Ascending aorta (tissue), 2 donors: ENCODE measurements at regions of chr20 and their contacts with region 1.

Region 1: GRCh38 chr20:21303061-21303871 is at the start of gene XRN2:
- DNase-seq: peak; percentile 76 to 97
- H3K4me3 ChIP-seq: peak within 1 kb of the TSS; percentile 76 to 80
- H3K27ac ChIP-seq: peak within 1 kb of the TSS; percentile 94 to 98
- H3K4me1 ChIP-seq: peaks cover 4 to 7% of the 10 kb centered on the region in 2 donors
- H3K27me3 ChIP-seq: no peaks in the 10 kb centered on the region
- CTCF ChIP-seq: peak in 1 of 3 experiments; percentile 12
- total RNA-seq, gene XRN2: 19.5 TPM

Region 2: DNA sequence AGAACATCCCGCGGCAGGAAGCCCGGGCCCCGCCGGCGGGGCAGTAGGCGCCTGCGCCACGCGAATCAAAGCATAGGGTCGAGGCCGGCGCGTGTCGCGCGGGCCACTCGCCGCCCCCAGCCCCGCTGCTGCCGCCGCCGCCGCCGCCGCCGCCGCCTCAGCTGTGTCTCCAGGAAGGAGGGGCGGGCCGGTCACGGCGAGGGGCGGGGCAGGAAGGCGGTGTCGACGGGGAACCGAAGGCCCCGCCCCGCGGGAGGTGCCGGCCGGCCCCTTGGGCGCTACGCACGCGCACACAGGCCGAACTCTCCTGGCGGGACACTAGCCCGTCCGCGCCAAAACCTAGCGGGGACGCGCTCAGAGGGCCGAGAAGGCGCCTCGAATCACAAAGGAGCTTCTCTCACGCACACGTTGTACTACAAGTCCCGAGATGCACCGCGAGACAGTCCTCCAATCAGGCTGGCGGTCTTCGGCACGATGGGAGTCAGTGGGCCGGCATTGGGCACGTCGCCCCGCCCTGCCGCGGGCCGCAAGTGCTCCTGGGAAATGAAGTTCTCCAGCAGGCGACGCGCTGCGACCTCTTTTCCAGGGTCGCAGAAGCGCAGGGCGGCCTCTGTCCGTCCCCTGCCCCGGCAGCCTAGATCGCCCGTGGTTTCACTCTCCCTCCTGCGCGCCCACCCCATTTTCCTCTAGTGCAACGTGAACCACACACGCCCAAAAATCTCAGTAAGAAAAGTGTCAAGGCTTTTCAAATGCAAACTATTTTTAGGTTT is 590.6 kb before region 1 on chr20 and contains the start of gene RALGAPA2:
- intact Hi-C with region 1: loop called (anchors 2 kb)
- DNase-seq: peak; percentile 92 to 99
- H3K4me3 ChIP-seq: peak within 1 kb of the TSS; percentile 93 to 96
- H3K27ac ChIP-seq: peak within 1 kb of the TSS; percentile 90 to 92
- H3K4me1 ChIP-seq: peaks cover 3 to 10% of the 10 kb centered on the region in 2 donors
- H3K27me3 ChIP-seq: no peaks in the 10 kb centered on the region
- CTCF ChIP-seq: peak in 2 of 3 experiments; percentile 13 to 21
- total RNA-seq, gene RALGAPA2: 68.9 TPM

Region 3: GRCh38 chr20:21125849-21126580 is 177.3 kb before region 1 on chr20 and contains the start of gene KIZ:
- intact Hi-C with region 1: loop called (anchors 2 kb)
- DNase-seq: peak; percentile 81 to 97
- H3K4me3 ChIP-seq: peak within 1 kb of the TSS; percentile 74 to 96
- H3K27ac ChIP-seq: peak within 1 kb of the TSS; percentile 72 to 83
- H3K4me1 ChIP-seq: peaks cover 2 to 4% of the 10 kb centered on the region in 2 donors
- H3K27me3 ChIP-seq: no peaks in the 10 kb centered on the region
- CTCF ChIP-seq: peak; percentile 39 to 67 (median 41)
- total RNA-seq, gene KIZ: 7.8 TPM

Region 4: GRCh38 chr20:21156266-21156665 is 147.0 kb before region 1 on chr20:
- intact Hi-C with region 1: no loop called
- DNase-seq: no peak
- H3K4me3 ChIP-seq: no peak overlapping the region
- H3K27ac ChIP-seq: no peak overlapping the region
- H3K4me1 ChIP-seq: no peaks in the 10 kb centered on the region
- H3K27me3 ChIP-seq: no peaks in the 10 kb centered on the region
- CTCF ChIP-seq: no peak

Region 5: DNA sequence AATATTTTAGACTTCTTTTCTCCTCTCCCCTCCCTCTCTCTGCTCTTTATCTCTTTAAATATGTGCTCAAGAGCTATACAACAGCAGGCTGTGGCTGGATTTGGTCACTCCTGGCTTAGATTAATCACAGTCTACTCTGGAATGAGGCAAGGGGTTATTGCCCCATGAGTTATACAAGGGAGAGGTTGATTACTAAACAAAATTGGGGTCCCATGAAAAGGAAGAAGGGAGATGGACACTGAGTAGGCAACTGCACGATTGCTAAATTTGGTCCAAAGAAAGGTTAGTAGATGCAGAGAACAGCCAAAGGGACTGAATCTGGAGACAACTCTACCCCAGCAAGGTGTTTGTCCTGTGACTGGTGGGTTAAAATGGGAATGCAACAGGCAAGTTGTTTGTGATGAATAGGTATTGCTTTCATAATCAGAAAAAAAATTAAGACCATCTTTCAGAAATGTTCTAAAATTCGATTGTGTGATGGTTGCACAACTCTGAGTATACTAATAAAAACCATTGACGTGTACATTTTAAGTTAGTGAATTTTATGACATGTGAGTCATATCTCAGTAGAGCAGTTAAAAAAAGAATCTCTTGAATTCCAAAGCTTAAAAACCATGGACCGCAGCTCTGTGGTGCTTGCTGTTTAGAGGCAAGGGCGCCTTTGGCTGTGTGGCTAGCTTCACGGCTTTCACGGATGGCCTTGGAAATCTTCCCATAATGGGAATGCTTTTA is 120.3 kb before region 1 on chr20:
- intact Hi-C with region 1: loop called (anchors 5 kb)
- DNase-seq: peak in 1 of 2 donors; percentile 69
- H3K4me3 ChIP-seq: no peak overlapping the region
- H3K27ac ChIP-seq: peak overlapping the region; percentile 55 to 79
- H3K4me1 ChIP-seq: peaks cover 0 to 14% of the 10 kb centered on the region in 2 donors
- H3K27me3 ChIP-seq: no peaks in the 10 kb centered on the region
- CTCF ChIP-seq: no peak

Region 6: DNA sequence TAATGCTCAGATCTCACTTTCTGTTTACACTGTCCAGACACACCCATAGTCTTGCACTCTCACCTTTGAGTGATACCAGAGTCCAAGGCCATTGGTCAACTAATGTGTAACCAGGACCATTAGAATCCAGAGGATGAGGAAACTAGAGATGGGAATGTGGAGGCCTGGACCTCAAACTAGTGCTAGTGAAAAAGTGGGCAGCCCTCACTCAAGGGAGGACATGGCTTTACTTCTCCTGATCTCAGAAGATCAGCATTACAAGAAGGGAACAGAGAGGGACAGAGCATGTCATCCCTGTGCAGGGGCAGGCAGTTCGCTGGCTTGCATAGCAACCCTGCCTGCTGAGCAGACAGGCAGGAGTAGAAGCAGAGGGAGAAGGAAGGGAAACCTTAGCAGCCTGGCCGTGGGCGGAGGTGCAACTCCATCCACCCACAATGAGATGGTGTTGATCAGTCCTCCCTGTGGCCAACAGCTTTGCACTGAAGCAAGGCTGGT is 22.7 kb before region 1 on chr20:
- intact Hi-C with region 1: no loop called
- DNase-seq: no peak
- H3K4me3 ChIP-seq: no peak overlapping the region
- H3K27ac ChIP-seq: no peak overlapping the region
- H3K4me1 ChIP-seq: no peaks in the 10 kb centered on the region
- H3K27me3 ChIP-seq: no peaks in the 10 kb centered on the region
- CTCF ChIP-seq: no peak